ENCODE measurements at regions of chr7 and their contacts with region 1.

Region 1: DNA sequence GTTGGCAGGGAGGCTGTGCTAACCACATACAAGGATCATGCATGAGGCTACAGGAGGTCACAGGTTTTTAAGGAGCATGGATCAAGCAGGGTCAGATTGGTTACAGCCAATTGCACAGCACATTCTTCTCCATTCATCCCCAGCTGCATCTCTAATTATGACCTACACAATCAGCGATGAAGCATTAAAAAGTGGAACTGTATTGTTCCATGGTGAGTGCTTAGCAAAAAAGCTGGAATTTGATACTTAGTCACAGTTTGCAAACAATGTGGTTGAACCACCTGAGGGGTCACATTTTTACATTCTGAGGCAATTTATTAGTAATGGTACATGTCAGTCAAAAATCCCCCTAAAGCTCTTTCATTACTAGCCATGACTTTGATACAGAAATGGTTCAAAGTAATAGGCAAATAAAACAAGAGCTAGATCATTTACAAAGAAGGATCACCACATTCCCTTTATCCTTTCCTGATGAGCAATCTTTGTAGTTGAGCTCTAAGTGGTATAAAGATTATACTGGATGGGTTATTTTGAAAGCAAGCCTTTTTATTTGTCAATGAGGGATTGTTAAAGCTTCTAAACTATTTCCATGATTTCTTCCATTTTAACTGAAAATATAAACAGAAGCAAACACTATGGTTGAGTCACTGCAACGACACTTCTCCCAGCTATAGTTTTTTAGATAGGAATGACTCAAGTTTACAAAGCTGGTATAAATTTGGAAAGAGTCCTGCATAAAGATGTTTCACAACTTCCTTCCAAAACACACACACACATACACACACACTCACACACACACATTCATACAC is 217.8 kb upstream of the SEMA3A start:
- DNase-seq: peak; percentile 88
- H3K4me3 ChIP-seq: peak overlapping the region in 1 of 3 experiments; percentile 31
- H3K27ac ChIP-seq: peak overlapping the region; percentile 92
- H3K4me1 ChIP-seq: peaks cover 14% of the 10 kb centered on the region
- H3K27me3 ChIP-seq: no peaks in the 10 kb centered on the region
- CTCF ChIP-seq: no peak

Region 2: GRCh38 chr7:84237533-84238173 is 174.7 kb before region 1 on chr7:
- CTCF ChIA-PET with region 1: no interaction called
- dilution Hi-C with region 1: no loop called
- in situ Hi-C with region 1: no loop called
- intact Hi-C with region 1: loop called (anchors 5 kb)
- DNase-seq: peak; percentile 97
- H3K4me3 ChIP-seq: no peak overlapping the region
- H3K27ac ChIP-seq: peak overlapping the region; percentile 99
- H3K4me1 ChIP-seq: peaks cover 24% of the 10 kb centered on the region
- H3K27me3 ChIP-seq: no peaks in the 10 kb centered on the region
- CTCF ChIP-seq: no peak